Sciatic nerve (tissue), 2 donors: ENCODE measurements at regions of chr14 and their contacts with region 1.

Region 1: GRCh38 chr14:54691525-54692283 is 124.8 kb downstream of the SAMD4A start:
- DNase-seq: peak; percentile 89
- ATAC-seq: peak; percentile 84

Region 2: DNA sequence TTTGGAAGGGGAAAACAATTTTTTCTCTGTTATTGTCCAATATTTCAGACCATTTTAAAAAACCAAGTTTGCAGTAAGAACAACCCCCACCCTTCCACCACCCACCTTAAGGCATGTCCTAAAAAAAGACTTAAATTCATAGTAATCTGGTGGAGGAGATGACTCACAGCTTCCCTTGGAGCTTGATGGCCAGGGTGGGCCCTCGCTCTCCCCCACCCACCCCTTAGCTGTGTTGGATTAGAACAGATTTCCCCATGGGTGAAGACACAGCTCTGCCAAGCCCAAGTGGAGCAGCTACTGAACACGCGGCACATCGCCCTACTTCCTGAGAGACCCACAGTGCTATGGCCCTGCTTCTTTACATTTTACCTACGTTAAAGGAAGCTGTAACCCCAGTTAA is 70.6 kb after region 1 on chr14:
- intact Hi-C with region 1: loop called (anchors 10 kb)
- DNase-seq: no peak
- ATAC-seq: no peak

Region 3: GRCh38 chr14:54818201-54819133 is 126.8 kb after region 1 on chr14:
- intact Hi-C with region 1: no loop called
- DNase-seq: no peak
- ATAC-seq: peak; percentile 75